Dorsolateral prefrontal cortex (tissue), 120 donors: ENCODE measurements at regions of chr18 and their contacts with region 1.

Region 1: GRCh38 chr18:37564711-37565100 is 892 bp downstream of the CELF4 start:
- DNase-seq: peak in 5 of 10 donors; percentile 39 to 66 (median 49)
- H3K4me3 ChIP-seq: peak overlapping the region; percentile 50 to 89 (median 69)
- H3K27ac ChIP-seq: peak overlapping the region in 56 of 59 donors; percentile 5 to 91 (median 78)
- H3K27me3 ChIP-seq: peaks cover 0 to 19% (median 0%) of the 10 kb centered on the region in 45 donors
- CTCF ChIP-seq: peak in 3 of 56 donors; percentile 11 to 23 (median 11)

Region 2: GRCh38 chr18:37393945-37394609 is 170.6 kb before region 1 on chr18:
- intact Hi-C with region 1: loop called in 1 of 2 experiments (anchors 10 kb)
- DNase-seq: peak; percentile 87 to 96 (median 92)
- H3K4me3 ChIP-seq: peak overlapping the region; percentile 26 to 75 (median 61)
- H3K27ac ChIP-seq: peak overlapping the region in 58 of 59 donors; percentile 35 to 91 (median 84)
- H3K27me3 ChIP-seq: peaks cover 0 to 3% (median 0%) of the 10 kb centered on the region in 45 donors
- CTCF ChIP-seq: peak in 50 of 56 donors; percentile 14 to 69 (median 44)

Region 3: GRCh38 chr18:37634516-37634915 is 69.8 kb after region 1 on chr18:
- intact Hi-C with region 1: no loop called
- DNase-seq: no peak
- H3K4me3 ChIP-seq: no peak overlapping the region
- H3K27ac ChIP-seq: no peak overlapping the region
- H3K27me3 ChIP-seq: no peaks in the 10 kb centered on the region
- CTCF ChIP-seq: no peak

Region 4: DNA sequence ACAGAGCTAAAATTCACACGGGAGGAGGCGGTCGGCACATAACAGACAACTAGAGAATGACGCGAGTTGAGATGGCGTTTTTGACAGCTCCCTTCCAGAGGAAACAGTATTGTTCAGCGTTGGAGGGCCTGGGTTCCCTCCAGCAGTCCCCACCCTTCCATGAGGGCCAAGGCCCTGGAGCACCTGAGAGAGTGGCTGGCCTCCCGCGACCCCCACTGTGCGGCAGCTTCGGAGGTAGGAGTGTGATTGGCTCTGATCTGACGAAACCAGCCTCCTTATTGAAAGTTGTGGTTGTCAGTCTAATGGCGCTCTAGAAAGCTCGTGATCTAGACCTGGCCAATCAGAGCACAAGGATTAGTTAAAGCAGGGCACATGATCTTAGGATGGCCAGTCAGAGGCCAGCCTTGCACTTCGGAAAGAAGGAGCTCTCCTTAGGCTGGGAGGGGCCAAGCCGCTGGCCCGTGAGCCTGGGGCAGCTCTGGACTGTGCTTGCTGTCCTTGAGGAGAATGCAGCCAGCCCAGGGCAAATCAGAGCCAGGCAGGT is 105.4 kb after region 1 on chr18:
- intact Hi-C with region 1: loop called in 1 of 2 experiments (anchors 5 kb)
- DNase-seq: no peak
- H3K4me3 ChIP-seq: no peak overlapping the region
- H3K27ac ChIP-seq: no peak overlapping the region
- H3K27me3 ChIP-seq: no peaks in the 10 kb centered on the region
- CTCF ChIP-seq: no peak